Ovary (tissue), 10 donors: ENCODE measurements at regions of chr17 and their contacts with region 1.

Region 1: DNA sequence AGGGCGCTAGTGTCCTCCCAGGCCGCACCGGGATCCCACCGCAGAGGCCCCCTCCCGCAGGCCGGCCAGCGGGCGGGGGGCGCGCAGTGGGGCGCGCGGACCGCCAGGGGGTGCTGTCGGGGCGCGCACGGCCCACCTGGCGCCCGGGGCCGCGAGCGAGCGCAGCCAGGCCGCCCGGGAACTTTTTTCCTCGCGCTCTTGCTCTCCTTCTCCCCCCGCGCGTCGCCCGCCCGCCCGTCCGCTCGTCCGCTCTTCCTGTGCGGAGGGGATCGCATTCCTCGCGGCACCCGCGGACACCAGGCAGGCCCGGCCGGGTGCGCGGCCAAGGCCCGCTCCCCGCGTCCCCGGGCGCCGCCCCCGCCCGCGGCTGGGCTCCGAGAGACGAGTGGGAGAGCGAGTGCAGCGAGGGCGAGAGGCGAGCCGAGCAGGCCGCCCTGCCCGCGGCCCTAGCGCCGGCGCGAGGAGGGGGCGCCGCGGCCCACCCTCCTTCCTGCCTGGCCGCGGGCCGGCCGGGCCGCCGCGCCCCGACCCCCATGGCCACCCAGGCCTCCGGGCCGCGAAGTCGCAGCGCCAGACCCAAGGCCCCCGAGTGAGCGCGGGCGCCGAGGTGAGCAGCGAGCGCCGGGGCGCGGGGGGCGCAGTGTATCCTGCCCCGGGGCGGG is at the start of gene RAI1:
- DNase-seq: peak; percentile 80 to 90 (median 85)
- H3K4me3 ChIP-seq: peak within 1 kb of the TSS; percentile 68
- H3K27ac ChIP-seq: peak within 1 kb of the TSS; percentile 89 to 96
- H3K4me1 ChIP-seq: peaks cover 19% of the 10 kb centered on the region
- H3K27me3 ChIP-seq: no peaks in the 10 kb centered on the region
- CTCF ChIP-seq: peak; percentile 17 to 98 (median 94)
- EP300 ChIP-seq: no peak
- POLR2A ChIP-seq: peak; percentile 53
- total RNA-seq, gene RAI1: 16.3 to 57.7 (median 37.5) TPM

Region 2: DNA sequence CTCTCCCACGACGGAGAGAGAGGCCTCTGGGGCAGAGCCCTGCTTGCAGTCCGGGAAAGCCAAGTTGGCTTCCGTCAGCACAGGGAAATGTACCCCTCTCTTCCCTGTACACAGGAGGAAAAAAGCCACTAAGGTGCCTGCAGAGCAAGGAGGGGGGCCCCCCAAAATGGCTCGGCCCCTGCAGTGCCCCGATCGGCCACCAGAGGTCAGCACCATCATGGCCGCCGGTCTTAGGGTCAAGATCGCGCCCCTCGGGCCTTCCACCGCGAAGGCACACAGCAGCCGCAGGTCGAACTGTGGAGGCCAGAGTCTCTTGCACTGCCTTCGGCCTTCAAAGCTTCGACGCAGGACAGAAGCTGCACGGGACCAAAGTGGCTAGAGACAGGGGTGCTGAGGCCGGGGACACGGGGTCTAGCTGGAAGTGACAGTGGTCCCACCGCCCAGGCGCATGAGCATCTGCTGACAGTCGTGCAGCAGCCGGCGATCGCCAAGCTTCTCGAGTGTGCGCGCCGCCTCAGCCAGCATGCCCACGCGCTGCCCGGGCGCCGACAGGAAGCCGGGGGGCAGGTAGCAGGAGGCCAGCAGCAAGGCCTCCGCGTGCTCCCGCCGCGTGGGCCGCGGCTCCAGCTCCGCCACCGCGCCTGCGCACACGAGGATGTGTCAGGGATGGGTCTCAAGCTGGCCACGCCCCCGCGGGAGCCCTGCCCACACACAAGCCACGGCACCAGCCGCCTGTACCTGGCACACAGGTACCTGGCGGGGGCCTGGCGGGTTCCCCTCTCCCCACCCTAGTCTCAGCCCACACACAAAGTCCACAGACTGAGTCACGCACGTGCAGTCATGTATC is 131.1 kb after region 1 on chr17:
- intact Hi-C with region 1: loop called in 1 of 4 experiments (anchors 10 kb)
- DNase-seq: peak; percentile 80 to 91 (median 87)
- H3K4me3 ChIP-seq: no peak overlapping the region
- H3K27ac ChIP-seq: peak overlapping the region; percentile 5 to 66
- H3K4me1 ChIP-seq: peaks cover 14% of the 10 kb centered on the region
- H3K27me3 ChIP-seq: no peaks in the 10 kb centered on the region
- CTCF ChIP-seq: peak; percentile 98 to 99 (median 99)
- EP300 ChIP-seq: no peak
- POLR2A ChIP-seq: no peak

Region 3: DNA sequence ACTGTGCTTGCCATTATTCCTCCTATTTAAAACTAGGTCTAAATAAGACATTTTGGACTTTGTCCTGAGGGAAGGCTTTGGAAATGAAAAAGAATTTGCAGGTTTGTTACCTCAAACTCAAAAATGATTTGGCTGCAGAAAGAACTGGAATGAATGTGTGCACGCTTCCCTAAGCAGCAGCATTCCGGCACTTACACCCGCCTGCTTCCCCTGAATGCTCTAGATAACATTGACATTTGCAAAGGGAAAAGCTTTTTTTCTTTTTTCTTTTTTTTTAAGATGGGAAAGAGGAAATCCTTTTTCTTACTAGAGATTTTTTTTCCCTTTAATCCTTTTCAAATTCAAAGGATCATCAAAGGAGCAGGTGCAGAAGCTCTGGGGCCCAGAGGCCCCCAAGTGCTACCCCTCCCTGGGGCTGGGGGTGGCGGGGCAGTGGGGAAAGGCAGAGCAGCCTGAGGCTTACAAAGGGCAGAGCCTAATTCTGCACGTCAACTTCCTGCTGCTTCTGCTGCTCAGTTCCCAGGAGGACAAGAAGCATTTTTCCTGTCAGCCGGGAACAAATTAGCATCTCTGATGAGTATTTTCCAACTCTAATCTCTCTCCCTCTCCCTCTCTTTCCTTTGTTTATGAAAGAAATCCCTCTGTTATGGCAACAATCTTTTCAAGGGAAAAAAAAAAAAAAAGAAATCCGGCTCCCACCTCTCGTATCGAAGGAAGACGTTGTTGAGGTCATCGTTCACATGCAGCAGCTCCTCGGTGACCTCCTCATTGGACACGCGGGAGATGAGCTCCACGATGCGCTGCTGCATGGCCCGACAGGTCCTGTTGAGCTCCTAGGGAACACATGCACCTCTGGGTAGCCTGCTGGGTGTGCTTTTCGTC is 187.6 kb after region 1 on chr17:
- intact Hi-C with region 1: loop called in 3 of 4 experiments (anchors 5 kb)
- DNase-seq: peak in 4 of 5 donors; percentile 50 to 74 (median 69)
- H3K4me3 ChIP-seq: no peak overlapping the region
- H3K27ac ChIP-seq: peak overlapping the region in 1 of 2 donors; percentile 6
- H3K4me1 ChIP-seq: peaks cover 10% of the 10 kb centered on the region
- H3K27me3 ChIP-seq: no peaks in the 10 kb centered on the region
- CTCF ChIP-seq: no peak
- EP300 ChIP-seq: peak; percentile 33
- POLR2A ChIP-seq: no peak

Region 4: GRCh38 chr17:18033442-18034099 is 352.3 kb after region 1 on chr17:
- intact Hi-C with region 1: loop called (anchors 2 to 10 kb)
- DNase-seq: peak in 3 of 5 donors; percentile 33 to 52 (median 40)
- H3K4me3 ChIP-seq: no peak overlapping the region
- H3K27ac ChIP-seq: no peak overlapping the region
- H3K4me1 ChIP-seq: no peaks in the 10 kb centered on the region
- H3K27me3 ChIP-seq: no peaks in the 10 kb centered on the region
- CTCF ChIP-seq: peak in 2 of 3 donors; percentile 60 to 65
- EP300 ChIP-seq: no peak
- POLR2A ChIP-seq: no peak